ENCODE measurements at regions of chr20 and their contacts with region 1.

Region 1: DNA sequence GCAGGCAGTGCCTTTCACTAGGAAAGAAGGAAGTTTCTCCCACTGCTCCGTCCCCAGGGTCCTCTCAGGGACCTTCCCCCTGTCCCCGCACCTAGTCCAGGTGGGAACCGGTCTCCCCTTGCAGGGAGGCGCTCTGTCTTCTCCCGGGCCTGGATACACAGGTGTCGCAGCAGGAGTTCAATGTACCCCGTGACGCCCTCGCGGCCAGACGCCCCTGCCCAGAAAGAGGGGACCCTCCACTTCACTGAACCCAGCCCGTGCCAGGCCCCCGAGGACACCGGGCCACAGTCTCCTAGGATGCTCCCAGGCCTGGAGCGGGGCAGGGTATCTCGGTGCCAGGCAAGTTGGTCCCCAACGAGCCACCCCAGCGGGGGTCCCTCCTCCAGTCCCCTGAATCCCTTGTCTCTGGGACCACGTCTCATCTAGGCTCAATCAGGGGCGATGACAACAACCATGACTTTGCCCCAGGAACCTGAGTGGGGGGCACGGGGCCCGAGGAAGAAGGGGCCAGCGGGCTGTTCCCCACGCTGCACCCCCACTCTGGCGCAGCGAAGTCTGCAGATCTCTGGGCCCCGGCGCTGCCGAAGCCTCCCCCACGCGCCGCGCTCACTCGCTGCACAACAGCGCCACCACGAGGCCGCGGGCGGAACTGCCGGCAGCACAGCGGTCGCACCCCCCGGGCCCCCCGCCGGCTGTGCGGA is 103.0 kb downstream of the EDN3 start:
- DNase-seq: peak; percentile 62
- H3K4me3 ChIP-seq: peak overlapping the region; percentile 12
- H3K27ac ChIP-seq: no peak overlapping the region
- H3K4me1 ChIP-seq: peaks cover 12% of the 10 kb centered on the region
- H3K27me3 ChIP-seq: peaks cover 17% of the 10 kb centered on the region
- CTCF ChIP-seq: peak; percentile 100

Region 2: DNA sequence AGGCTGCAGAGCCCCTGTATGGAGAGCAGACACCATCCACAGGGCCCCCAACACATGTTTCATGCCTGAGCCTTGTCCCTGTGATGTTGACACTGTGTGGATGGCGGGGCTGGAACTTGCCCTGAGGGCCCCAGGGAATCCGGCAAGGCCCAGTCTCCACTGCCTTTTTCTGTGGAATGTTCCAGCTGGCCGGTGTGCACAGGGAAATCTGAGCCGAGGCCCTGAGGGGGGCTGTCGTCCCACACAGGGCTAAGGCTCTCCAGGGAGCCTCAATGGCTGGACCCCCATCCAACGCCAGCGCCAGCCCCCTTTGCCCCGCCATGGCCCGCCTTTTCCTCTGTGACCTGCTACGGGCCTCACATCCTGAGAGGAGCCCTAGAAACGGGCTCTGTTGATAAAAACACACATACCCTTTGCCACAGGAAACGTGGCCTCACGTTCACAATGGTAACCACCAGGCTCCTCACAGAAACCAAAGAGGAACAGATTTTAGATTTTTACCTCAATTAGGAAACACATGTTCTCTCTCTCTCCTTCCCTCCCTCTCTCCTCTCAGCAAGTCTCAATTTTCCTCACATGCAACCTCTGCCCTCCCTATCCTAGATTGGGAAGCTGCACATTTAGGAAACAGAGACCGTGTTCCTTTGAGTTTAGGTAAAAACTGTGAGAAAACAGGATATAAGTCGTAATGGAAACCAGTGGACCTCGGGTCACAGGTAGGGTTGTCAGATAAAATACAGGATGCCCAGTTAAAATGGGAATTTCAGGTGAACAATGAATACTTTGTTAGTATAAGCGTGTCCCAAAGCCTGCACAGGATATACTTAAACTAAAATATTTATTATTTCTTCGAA is 253.5 kb before region 1 on chr20:
- intact Hi-C with region 1: no loop called
- DNase-seq: no peak
- H3K4me3 ChIP-seq: no peak overlapping the region
- H3K27ac ChIP-seq: peak overlapping the region; percentile 27
- H3K4me1 ChIP-seq: no peaks in the 10 kb centered on the region
- H3K27me3 ChIP-seq: no peaks in the 10 kb centered on the region
- CTCF ChIP-seq: no peak

Region 3: GRCh38 chr20:59222253-59223181 is 180.9 kb before region 1 on chr20:
- intact Hi-C with region 1: loop called (anchors 5 kb)
- DNase-seq: peak; percentile 86
- H3K4me3 ChIP-seq: peak overlapping the region; percentile 59
- H3K27ac ChIP-seq: no peak overlapping the region
- H3K4me1 ChIP-seq: no peaks in the 10 kb centered on the region
- H3K27me3 ChIP-seq: peaks cover 3% of the 10 kb centered on the region
- CTCF ChIP-seq: peak; percentile 93

Region 4: DNA sequence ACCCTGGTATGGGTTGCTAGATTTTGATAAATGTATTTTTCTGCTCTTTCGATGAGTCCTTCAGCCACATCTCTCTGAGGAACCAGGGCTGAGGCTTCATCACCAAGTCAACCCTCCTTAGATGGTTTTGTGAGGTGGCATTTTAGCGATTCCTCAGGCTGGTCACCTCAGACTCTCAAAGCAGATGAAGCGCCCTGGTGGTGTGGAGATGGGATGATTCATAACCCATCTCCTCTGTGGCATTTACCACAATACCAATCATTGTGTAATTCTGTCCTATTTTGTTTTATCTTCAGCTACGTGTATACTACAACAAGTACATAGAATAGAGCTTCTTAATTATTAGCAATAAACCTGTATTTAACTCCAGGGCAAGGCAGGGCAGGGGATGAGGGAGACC is 160.7 kb before region 1 on chr20:
- intact Hi-C with region 1: no loop called
- DNase-seq: no peak
- H3K4me3 ChIP-seq: no peak overlapping the region
- H3K27ac ChIP-seq: no peak overlapping the region
- H3K4me1 ChIP-seq: no peaks in the 10 kb centered on the region
- H3K27me3 ChIP-seq: no peaks in the 10 kb centered on the region
- CTCF ChIP-seq: no peak

Region 5: GRCh38 chr20:59472059-59472458 is 68.6 kb after region 1 on chr20:
- intact Hi-C with region 1: no loop called
- DNase-seq: no peak
- H3K4me3 ChIP-seq: no peak overlapping the region
- H3K27ac ChIP-seq: no peak overlapping the region
- H3K4me1 ChIP-seq: no peaks in the 10 kb centered on the region
- H3K27me3 ChIP-seq: no peaks in the 10 kb centered on the region
- CTCF ChIP-seq: no peak

Region 6: DNA sequence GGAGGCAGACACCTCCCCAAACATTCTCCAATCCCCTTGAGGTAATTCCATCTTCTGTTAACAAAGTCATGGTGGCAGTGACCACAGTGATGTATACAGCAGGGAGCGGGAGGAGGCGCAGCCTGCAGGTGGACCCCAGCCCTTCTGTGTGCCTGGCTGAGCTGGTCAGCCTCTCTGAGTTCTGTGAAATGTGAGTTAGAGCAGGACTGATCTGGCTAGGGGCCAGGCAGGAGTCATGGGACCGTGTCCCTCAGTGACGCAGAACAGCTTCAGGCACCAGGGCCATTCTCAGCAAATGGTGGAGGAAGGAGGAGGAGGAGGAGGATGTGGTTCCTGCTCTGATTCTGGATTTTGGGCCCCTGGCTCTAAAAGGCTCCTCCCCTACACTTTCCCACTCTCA is 207.9 kb after region 1 on chr20:
- intact Hi-C with region 1: no loop called
- DNase-seq: no peak
- H3K4me3 ChIP-seq: no peak overlapping the region
- H3K27ac ChIP-seq: no peak overlapping the region
- H3K4me1 ChIP-seq: no peaks in the 10 kb centered on the region
- H3K27me3 ChIP-seq: peaks cover 22% of the 10 kb centered on the region
- CTCF ChIP-seq: no peak